ENCODE measurements at regions of chr16 and their contacts with region 1.

Region 1: DNA sequence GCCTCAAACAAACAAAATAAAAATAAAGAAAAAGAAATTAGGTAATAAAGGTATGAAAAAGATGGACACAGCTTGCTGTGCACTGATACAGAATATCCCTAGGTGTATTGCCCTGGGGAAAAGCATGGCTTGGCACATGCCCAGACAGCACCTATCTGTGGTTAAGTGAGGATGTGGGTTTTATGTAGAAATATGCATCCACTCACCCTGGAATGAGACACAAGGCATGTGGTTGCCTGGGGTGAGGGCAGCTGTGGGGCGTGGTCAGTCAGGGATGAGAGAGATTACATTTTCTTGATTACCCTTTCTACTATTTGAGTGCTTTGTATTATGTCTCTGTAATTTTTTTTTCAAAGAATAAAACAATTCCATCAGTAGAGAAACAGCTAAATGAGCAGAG is 6.9 kb downstream of the PLLP start:
- DNase-seq: peak; percentile 94
- H3K4me3 Mint-ChIP-seq: peak overlapping the region; percentile 53
- H3K27ac Mint-ChIP-seq: peak overlapping the region; percentile 89
- H3K4me1 Mint-ChIP-seq: peaks cover 36% of the 10 kb centered on the region
- H3K27me3 Mint-ChIP-seq: no peaks in the 10 kb centered on the region
- CTCF ChIP-seq: no peak

Region 2: DNA sequence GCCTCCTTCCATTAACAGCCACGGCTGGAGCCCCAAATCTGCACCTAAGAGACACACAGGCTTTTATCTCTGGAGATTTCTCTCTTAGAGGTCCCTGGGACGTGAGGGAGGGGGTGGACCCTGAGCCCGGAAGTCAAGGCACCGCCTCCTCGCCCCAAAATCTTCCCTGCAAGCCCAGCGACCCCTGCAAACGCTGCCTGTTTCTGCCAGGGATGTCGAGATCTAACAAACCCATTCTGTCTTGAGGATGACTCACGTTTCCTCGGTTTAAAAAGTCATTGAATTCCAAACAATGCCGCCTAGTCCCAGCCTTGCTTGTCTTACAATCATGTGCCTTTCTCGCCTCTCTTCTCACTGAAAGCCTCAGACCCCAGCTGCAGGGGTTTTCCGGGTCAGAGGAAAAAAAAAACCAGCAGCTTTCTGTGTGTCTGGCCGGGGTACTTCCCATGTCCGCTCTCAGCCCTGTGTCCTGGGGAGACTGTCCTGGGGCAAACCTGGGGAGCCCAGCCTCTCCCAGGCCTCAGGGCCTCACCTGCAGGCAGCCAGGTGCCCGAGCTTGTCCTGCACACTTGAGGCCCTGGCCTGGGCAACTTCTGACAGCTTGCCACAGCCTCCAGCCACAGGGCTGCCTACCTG is 17.2 kb before region 1 on chr16:
- CTCF ChIA-PET with region 1: interaction called, 5 read pairs
- POLR2A ChIA-PET with region 1: interaction called, 137 read pairs
- intact Hi-C with region 1: no loop called
- DNase-seq: peak; percentile 73
- H3K4me3 Mint-ChIP-seq: peak overlapping the region; percentile 47
- H3K27ac Mint-ChIP-seq: peak overlapping the region; percentile 93
- H3K4me1 Mint-ChIP-seq: peaks cover 20% of the 10 kb centered on the region
- H3K27me3 Mint-ChIP-seq: no peaks in the 10 kb centered on the region
- CTCF ChIP-seq: no peak

Region 3: GRCh38 chr16:57265850-57266530 is 11.6 kb before region 1 on chr16:
- CTCF ChIA-PET with region 1: interaction called, 6 read pairs
- POLR2A ChIA-PET with region 1: interaction called, 137 read pairs
- intact Hi-C with region 1: no loop called
- DNase-seq: peak; percentile 84
- H3K4me3 Mint-ChIP-seq: peak overlapping the region; percentile 69
- H3K27ac Mint-ChIP-seq: peak overlapping the region; percentile 89
- H3K4me1 Mint-ChIP-seq: peaks cover 25% of the 10 kb centered on the region
- H3K27me3 Mint-ChIP-seq: no peaks in the 10 kb centered on the region
- CTCF ChIP-seq: no peak

Region 4: DNA sequence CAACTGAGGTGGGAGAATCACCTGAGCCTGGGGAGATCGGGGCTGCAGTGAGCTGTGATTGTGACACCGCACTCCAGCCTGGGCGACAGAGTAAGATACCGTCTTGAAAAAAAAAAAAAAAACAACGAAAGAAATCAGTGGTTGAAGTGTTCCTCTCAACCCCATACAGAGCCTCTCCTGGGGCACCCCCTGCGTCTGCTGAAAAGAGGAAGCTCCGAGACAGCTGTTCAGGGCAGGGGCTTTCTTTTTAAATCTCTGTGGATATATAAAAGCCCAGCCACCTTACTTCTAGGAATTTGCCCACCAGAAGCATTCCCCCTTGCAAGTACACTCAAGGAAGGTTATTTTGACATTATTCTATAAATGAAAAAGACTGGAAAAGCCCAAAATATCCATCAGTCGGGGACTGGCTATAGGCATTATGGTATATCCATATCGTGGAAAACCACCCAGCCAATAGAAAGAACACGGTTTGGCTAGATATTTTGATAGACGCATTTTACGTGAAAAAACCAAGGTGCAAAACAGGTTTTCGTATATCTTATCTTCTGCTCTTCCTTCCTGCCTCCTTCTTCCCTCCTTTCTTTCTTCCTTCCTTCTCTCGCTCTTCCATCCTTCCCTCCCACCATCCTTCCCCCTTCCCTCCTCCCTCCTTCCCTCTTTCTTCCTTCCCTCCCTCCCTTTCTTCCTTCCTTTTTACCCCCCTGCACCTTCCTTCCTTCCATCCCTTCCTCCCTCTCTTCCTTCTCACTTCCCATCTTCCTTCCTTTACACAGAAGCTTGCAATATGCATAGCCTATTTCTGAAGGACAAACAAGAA is 71.8 kb after region 1 on chr16:
- CTCF ChIA-PET with region 1: no interaction called
- POLR2A ChIA-PET with region 1: no interaction called
- intact Hi-C with region 1: no loop called
- DNase-seq: no peak
- H3K4me3 Mint-ChIP-seq: no peak overlapping the region
- H3K27ac Mint-ChIP-seq: no peak overlapping the region
- H3K4me1 Mint-ChIP-seq: no peaks in the 10 kb centered on the region
- H3K27me3 Mint-ChIP-seq: peaks cover 33% of the 10 kb centered on the region
- CTCF ChIP-seq: no peak

Region 5: DNA sequence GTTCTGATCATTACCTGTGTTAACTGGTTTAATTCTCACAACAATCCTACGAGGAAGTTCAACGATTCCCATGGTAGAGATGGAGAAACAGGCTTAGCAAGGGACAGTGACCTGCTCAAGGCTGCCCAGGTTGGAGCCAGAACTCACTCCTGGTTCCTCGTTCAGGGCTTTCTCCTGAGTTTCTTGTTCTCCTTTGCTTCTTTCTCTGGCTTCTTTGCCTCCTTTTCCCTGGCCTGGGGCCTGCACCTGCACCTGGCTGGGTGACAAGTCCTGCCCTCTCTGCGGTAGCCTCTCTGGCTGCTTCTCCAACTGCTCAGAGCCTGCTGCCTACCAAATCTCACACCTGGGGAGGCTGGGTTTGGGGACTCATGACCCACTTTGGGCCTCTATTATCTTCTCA is 83.8 kb after region 1 on chr16:
- CTCF ChIA-PET with region 1: no interaction called
- POLR2A ChIA-PET with region 1: no interaction called
- intact Hi-C with region 1: no loop called
- DNase-seq: no peak
- H3K4me3 Mint-ChIP-seq: no peak overlapping the region
- H3K27ac Mint-ChIP-seq: no peak overlapping the region
- H3K4me1 Mint-ChIP-seq: no peaks in the 10 kb centered on the region
- H3K27me3 Mint-ChIP-seq: no peaks in the 10 kb centered on the region
- CTCF ChIP-seq: no peak

Region 6: GRCh38 chr16:57447186-57447962 is 169.8 kb after region 1 on chr16 and contains the starts of genes CIAPIN1 and COQ9:
- CTCF ChIA-PET with region 1: no interaction called
- POLR2A ChIA-PET with region 1: interaction called, 14 read pairs
- intact Hi-C with region 1: no loop called
- DNase-seq: peak; percentile 95
- H3K4me3 Mint-ChIP-seq: peak within 1 kb of the TSS; percentile 90
- H3K27ac Mint-ChIP-seq: peak within 1 kb of the TSS; percentile 97
- H3K4me1 Mint-ChIP-seq: peaks cover 9% of the 10 kb centered on the region
- H3K27me3 Mint-ChIP-seq: no peaks in the 10 kb centered on the region
- CTCF ChIP-seq: no peak
- total RNA-seq, gene CIAPIN1: 99.9 and 105 TPM in 2 replicates
- total RNA-seq, gene COQ9: 72.5 and 80.8 TPM in 2 replicates

Measured in MCF 10A (cell line).